BJ (cell line): ENCODE measurements at regions of chr14 and their contacts with region 1.

Region 1: DNA sequence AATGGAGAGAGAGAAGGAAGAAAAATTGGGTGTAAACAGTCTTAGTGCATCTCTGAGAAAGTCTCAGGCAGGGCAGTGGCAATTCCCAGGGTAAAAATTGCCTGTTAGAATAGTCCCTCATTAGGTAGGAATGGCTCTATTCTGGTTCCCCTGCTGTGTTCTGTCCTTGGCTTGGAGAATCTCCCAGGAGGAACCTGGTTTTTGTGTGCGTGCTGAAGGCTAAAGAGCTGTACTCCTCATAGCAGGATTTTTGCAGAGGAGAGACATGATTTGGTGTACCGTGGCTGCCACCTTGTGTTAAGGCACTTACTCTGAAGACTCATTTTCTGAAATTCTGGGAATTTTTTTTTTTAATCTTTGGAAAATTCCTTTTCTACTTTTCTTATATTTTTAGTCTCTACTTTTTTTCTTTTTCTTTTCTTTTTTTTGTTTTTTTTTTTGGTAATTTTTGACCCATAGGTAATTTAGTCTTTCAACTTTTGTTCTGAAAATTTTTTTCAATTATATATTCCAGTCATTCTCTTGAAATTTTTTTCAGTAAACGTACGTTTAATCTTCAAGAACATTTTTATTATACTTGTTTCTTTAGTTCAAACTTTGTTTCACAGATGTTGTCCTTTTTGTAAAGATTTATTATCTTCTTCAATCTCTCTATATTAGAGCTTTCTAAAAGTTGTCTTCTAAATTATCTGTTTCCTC is 63.8 kb downstream of the FBXO33 start:
- DNase-seq: no peak
- H3K4me3 ChIP-seq: no peak overlapping the region
- H3K27me3 ChIP-seq: no peaks in the 10 kb centered on the region
- CTCF ChIP-seq: peak; percentile 57

Region 2: DNA sequence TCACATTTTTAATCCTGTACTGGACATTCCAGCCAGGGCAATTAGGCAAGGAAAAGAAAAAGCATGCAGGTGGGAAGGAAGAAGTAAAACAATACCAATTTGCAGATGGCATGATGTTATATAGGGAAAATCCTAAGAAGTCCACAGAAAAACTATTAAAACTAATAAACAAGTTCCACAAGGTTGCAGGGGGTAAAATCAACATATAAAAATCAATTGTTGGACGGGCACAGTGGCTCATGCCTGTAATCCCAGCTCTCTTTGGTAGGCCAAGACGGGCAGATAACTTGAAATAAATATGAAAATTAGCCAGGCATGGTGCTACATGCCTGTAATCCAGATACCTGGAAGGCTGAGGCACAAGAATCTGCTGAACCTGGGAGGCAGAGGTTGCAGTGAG is 297.3 kb before region 1 on chr14:
- CTCF ChIA-PET with region 1: no interaction called
- POLR2A ChIA-PET with region 1: no interaction called
- DNase-seq: no peak
- H3K4me3 ChIP-seq: no peak overlapping the region
- H3K27me3 ChIP-seq: no peaks in the 10 kb centered on the region
- CTCF ChIP-seq: no peak

Region 3: DNA sequence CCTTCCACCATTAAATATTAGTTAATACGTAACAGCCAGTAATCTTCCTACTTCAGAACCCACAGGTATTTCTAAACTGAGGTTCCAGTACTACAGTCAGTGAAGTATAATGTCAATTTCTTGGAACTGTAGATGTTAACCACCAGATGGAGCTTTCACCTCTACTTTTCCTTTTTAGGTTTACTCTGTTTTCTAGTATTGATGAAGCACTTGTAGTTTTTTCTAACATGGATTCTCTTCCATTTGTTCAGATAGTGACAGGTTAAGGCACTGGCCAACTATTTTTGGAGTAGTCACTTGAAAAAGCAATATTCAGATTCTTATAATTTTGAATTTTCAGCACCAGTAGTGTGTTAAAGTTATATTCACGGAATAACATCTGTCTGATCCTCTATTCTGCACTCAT is 260.8 kb before region 1 on chr14:
- CTCF ChIA-PET with region 1: interaction called, 20 read pairs
- POLR2A ChIA-PET with region 1: no interaction called
- DNase-seq: no peak
- H3K4me3 ChIP-seq: no peak overlapping the region
- H3K27me3 ChIP-seq: no peaks in the 10 kb centered on the region
- CTCF ChIP-seq: peak; percentile 53

Region 4: GRCh38 chr14:39398382-39398781 is 30.0 kb after region 1 on chr14:
- CTCF ChIA-PET with region 1: no interaction called
- POLR2A ChIA-PET with region 1: no interaction called
- DNase-seq: no peak
- H3K4me3 ChIP-seq: no peak overlapping the region
- H3K27me3 ChIP-seq: no peaks in the 10 kb centered on the region
- CTCF ChIP-seq: no peak